Common myeloid progenitor, CD34-positive (primary cell): ENCODE measurements at regions of chr9 and their contacts with region 1.

Region 1: GRCh38 chr9:78035383-78035993 is 3.9 kb upstream of the GNAQ start:
- DNase-seq: peak; percentile 88 to 94 (median 89)
- H3K4me3 ChIP-seq: peak overlapping the region in 2 of 7 experiments; percentile 63 to 64
- H3K27ac ChIP-seq: no peak overlapping the region
- H3K4me1 ChIP-seq: peaks cover 7 to 38% (median 22%) of the 10 kb centered on the region in 4 experiments
- H3K27me3 ChIP-seq: no peaks in the 10 kb centered on the region

Region 2: GRCh38 chr9:77712533-77713130 is 322.9 kb before region 1 on chr9:
- CTCF ChIA-PET with region 1: no interaction called
- POLR2A ChIA-PET with region 1: no interaction called
- DNase-seq: peak in 2 of 3 donors; percentile 48 to 63
- H3K4me3 ChIP-seq: no peak overlapping the region
- H3K27ac ChIP-seq: no peak overlapping the region
- H3K4me1 ChIP-seq: peaks cover 7 to 38% (median 19%) of the 10 kb centered on the region in 4 experiments
- H3K27me3 ChIP-seq: no peaks in the 10 kb centered on the region

Region 3: GRCh38 chr9:77944556-77945243 is 90.8 kb before region 1 on chr9:
- CTCF ChIA-PET with region 1: interaction called, 14 read pairs
- POLR2A ChIA-PET with region 1: no interaction called
- DNase-seq: peak; percentile 79 to 93 (median 90)
- H3K4me3 ChIP-seq: peak overlapping the region in 4 of 7 experiments; percentile 42 to 58 (median 56)
- H3K27ac ChIP-seq: peak overlapping the region; percentile 40 to 71
- H3K4me1 ChIP-seq: peaks cover 27 to 81% (median 55%) of the 10 kb centered on the region in 4 experiments
- H3K27me3 ChIP-seq: no peaks in the 10 kb centered on the region

Region 4: DNA sequence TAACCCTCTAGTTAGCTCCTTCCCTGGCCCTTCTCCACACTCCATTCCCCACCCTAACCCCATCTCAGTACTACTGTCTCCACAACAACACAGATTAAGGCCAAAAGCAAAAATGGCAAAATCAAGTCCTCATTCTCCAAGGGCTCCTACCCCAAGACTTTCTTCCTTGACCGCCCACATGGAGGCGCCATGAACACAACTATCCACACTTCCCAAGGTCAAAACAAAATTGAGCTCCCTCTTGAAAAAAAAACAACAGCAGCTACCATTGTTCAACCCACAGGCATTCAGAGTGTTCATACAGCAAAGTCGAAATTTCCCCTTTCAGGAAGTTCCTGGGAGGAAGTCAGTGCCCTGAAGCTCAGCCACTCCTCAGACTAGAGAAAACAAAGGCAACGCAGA is 58.3 kb before region 1 on chr9:
- CTCF ChIA-PET with region 1: interaction called, 35 read pairs
- POLR2A ChIA-PET with region 1: interaction called, 4 read pairs
- DNase-seq: peak; percentile 83 to 86 (median 85)
- H3K4me3 ChIP-seq: peak overlapping the region in 5 of 7 experiments; percentile 11 to 57 (median 43)
- H3K27ac ChIP-seq: peak overlapping the region in 1 of 2 experiments; percentile 67
- H3K4me1 ChIP-seq: peaks cover 23 to 77% (median 54%) of the 10 kb centered on the region in 4 experiments
- H3K27me3 ChIP-seq: no peaks in the 10 kb centered on the region

Region 5: GRCh38 chr9:78023003-78023741 is 12.3 kb before region 1 on chr9:
- CTCF ChIA-PET with region 1: interaction called, 10 read pairs
- POLR2A ChIA-PET with region 1: interaction called, 3 read pairs
- DNase-seq: peak; percentile 76 to 98 (median 96)
- H3K4me3 ChIP-seq: peak overlapping the region in 6 of 7 experiments; percentile 50 to 82 (median 64)
- H3K27ac ChIP-seq: peak overlapping the region; percentile 41 to 67
- H3K4me1 ChIP-seq: peaks cover 17 to 80% (median 52%) of the 10 kb centered on the region in 4 experiments
- H3K27me3 ChIP-seq: no peaks in the 10 kb centered on the region

Region 6: GRCh38 chr9:78053627-78054026 is 18.1 kb after region 1 on chr9:
- CTCF ChIA-PET with region 1: interaction called, 14 read pairs
- POLR2A ChIA-PET with region 1: interaction called, 3 read pairs
- DNase-seq: no peak
- H3K4me3 ChIP-seq: no peak overlapping the region
- H3K27ac ChIP-seq: no peak overlapping the region
- H3K4me1 ChIP-seq: peaks cover 0 to 3% (median 0%) of the 10 kb centered on the region in 4 experiments
- H3K27me3 ChIP-seq: no peaks in the 10 kb centered on the region

Region 7: GRCh38 chr9:78121488-78121887 is 86.0 kb after region 1 on chr9:
- CTCF ChIA-PET with region 1: interaction called, 19 read pairs
- POLR2A ChIA-PET with region 1: no interaction called
- DNase-seq: peak; percentile 69 to 82 (median 70)
- H3K4me3 ChIP-seq: no peak overlapping the region
- H3K27ac ChIP-seq: no peak overlapping the region
- H3K4me1 ChIP-seq: peaks cover 0 to 13% (median 2%) of the 10 kb centered on the region in 4 experiments
- H3K27me3 ChIP-seq: no peaks in the 10 kb centered on the region